OCI-LY7 (cell line): ENCODE measurements at regions of chr1 and their contacts with region 1.

Region 1: DNA sequence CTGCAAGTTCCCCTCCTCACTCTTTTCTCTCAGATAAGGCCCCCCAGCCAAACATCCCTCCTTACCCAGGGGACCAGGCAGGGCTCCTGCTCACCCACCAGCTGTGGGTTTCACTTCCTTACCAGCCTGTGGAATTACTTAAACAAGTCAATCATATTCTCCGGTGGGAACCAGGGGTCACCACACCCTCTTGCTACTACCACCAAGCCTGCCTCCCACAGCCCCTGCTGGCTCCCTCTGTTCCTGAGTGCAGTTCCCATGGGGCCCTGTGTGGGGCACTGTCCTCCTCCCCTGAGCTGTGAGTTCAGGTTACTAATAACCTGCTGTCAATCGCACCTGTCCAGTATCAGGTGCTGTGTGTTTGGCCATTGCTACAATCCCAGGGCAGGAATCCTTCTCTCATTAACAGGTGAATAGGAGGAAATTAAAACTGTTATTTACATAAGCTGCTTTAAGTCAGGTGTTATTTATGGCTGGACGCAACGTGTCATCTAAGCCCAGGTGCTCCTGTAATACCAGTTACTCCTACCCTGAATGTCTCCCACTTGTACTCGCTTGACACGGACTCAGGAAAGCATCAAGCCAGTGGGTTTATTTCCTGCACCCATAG is 53.1 kb upstream of the LBR start:
- DNase-seq: peak; percentile 92
- H3K4me3 ChIP-seq: peak overlapping the region; percentile 35
- H3K27ac ChIP-seq: peak overlapping the region; percentile 92
- H3K4me1 ChIP-seq: peaks cover 76% of the 10 kb centered on the region
- CTCF ChIP-seq: peak; percentile 97

Region 2: DNA sequence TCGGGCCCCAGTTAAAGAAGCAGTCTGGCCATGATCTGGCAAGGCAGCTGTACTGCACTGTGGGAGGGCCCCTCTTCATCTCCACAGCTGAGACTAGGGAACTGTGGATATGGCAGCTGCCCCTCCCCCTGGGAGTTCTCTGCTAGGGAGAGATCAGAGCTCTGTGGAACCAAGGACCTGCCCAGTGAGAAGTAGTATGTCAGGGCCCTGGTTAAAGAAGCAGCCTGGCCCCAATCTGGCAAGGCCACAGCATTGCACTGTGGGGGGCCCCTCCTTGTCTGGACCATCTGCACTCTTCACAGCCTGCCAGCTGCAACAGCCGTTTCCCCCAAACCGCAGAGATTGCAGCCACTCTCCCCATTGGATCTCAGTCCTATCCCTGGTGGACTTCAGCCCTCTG is 342.9 kb before region 1 on chr1:
- CTCF ChIA-PET with region 1: no interaction called
- POLR2A ChIA-PET with region 1: no interaction called
- intact Hi-C with region 1: no loop called
- DNase-seq: no peak
- H3K4me3 ChIP-seq: no peak overlapping the region
- H3K27ac ChIP-seq: no peak overlapping the region
- H3K4me1 ChIP-seq: no peaks in the 10 kb centered on the region
- CTCF ChIP-seq: no peak

Region 3: DNA sequence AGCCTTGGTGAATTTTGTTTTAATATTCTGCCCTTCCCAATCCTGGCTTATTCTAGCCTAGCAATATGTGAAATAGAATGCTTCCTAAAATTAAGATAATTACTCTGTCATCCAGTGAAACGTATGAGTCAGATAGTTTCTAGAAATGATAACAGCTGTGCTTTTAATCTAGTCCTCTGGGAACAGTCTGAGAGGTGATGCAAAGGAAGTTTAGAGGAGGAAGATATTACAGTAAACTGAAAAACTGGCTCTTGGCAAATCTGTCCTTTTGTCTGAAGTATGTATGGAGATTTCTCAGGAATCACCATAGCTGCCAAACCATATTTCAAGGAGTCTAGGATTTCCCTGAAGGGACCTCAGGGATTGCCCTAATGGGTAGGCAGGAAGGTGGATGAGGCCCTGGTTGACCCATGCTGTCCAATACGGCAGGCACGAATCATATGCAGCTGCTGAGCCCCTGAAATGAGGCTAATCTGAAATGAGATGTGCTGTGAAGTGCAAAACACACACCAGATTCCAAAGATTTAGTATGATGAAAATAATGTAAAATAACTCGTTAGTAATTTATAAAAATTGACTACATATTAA is 17.7 kb after region 1 on chr1:
- CTCF ChIA-PET with region 1: interaction called, 3 read pairs
- POLR2A ChIA-PET with region 1: interaction called, 19 read pairs
- intact Hi-C with region 1: no loop called
- DNase-seq: no peak
- H3K4me3 ChIP-seq: no peak overlapping the region
- H3K27ac ChIP-seq: no peak overlapping the region
- H3K4me1 ChIP-seq: peaks cover 36% of the 10 kb centered on the region
- CTCF ChIP-seq: no peak

Region 4: GRCh38 chr1:225504776-225505175 is 23.8 kb after region 1 on chr1:
- CTCF ChIA-PET with region 1: no interaction called
- POLR2A ChIA-PET with region 1: interaction called, 12 read pairs
- intact Hi-C with region 1: no loop called
- DNase-seq: no peak
- H3K4me3 ChIP-seq: no peak overlapping the region
- H3K27ac ChIP-seq: no peak overlapping the region
- H3K4me1 ChIP-seq: peaks cover 15% of the 10 kb centered on the region
- CTCF ChIP-seq: no peak

Region 5: DNA sequence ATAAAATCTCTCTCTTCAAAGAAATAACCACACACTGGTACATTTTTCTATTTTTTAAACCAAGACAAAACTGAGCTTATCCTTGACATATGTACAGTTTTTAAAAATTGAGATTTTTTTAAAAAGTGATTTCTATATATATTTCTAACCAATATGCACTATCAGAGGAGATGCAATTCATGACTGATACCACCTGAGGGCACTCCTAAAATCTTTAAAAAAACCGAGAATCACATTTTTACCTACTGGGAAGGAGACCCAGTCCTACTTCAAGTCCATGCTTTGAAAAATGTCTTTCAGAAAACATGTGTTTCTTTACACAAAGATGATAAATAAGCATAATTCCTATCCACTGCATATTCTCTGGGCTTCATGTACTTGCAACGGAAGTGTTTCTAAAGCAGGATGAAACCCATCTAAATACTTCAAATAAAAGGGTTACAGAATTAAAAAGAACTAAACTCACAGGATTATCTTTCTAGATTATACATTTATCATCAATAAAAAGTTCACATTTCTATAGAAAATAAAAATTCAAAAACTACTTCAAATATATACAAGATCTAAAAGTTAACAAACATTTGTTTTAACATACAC is 73.4 kb after region 1 on chr1:
- CTCF ChIA-PET with region 1: no interaction called
- POLR2A ChIA-PET with region 1: interaction called, 5 read pairs
- intact Hi-C with region 1: loop called (anchors 2 kb)
- DNase-seq: peak; percentile 56
- H3K4me3 ChIP-seq: no peak overlapping the region
- H3K27ac ChIP-seq: no peak overlapping the region
- H3K4me1 ChIP-seq: no peaks in the 10 kb centered on the region
- CTCF ChIP-seq: peak; percentile 94

Region 6: DNA sequence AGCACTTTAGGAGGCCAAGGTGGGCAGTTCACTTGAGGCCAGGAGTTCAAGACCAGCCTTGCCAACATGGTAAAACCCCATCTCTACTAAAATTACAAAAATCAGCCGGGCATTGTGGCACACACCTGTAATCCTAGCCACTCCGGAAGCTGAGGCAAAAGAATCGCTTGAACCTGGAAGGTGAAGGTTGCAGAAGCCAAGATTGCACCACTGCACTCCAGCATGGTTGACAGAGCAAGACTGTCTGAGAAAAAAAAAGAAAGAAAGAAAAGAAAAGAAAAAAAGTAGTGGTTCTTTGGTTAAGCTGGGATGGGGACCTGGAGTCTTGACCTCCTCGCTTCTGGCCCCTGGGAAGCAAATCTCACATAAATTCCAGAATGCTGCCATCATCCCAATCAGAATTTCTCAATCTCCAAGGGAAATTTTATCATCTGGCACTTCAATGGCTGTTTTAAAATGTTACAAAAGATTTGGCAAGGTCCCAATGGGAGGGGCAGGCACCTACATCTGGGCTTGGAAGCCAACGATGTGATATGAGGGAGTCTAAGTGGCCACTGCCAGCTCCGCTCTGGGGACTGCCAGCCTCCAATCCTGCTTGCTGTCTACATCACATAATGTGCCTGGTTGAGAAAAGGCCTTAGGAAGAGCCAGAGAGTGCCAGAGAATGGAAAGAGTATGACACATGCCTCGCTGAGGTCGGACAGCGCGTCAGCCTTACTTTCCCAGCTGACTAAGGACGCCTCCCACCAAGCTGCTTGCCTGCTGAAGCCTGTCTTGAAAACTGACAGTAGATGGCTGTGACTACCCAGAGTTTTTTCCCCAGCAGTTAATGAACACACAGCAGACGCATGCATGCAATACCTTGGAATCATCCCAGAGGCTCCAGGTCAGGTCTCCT is 254.6 kb after region 1 on chr1:
- CTCF ChIA-PET with region 1: no interaction called
- POLR2A ChIA-PET with region 1: no interaction called
- intact Hi-C with region 1: no loop called
- DNase-seq: no peak
- H3K4me3 ChIP-seq: no peak overlapping the region
- H3K27ac ChIP-seq: no peak overlapping the region
- H3K4me1 ChIP-seq: no peaks in the 10 kb centered on the region
- CTCF ChIP-seq: no peak

Region 7: GRCh38 chr1:225766967-225767633 is 286.2 kb after region 1 on chr1:
- CTCF ChIA-PET with region 1: interaction called, 11 read pairs
- POLR2A ChIA-PET with region 1: interaction called, 7 read pairs
- intact Hi-C with region 1: no loop called
- DNase-seq: peak; percentile 24
- H3K4me3 ChIP-seq: peak overlapping the region; percentile 7
- H3K27ac ChIP-seq: peak overlapping the region; percentile 49
- H3K4me1 ChIP-seq: peaks cover 56% of the 10 kb centered on the region
- CTCF ChIP-seq: no peak